Heart right ventricle (tissue), 16 donors: ENCODE measurements at regions of chr3 and their contacts with region 1.

Region 1: DNA sequence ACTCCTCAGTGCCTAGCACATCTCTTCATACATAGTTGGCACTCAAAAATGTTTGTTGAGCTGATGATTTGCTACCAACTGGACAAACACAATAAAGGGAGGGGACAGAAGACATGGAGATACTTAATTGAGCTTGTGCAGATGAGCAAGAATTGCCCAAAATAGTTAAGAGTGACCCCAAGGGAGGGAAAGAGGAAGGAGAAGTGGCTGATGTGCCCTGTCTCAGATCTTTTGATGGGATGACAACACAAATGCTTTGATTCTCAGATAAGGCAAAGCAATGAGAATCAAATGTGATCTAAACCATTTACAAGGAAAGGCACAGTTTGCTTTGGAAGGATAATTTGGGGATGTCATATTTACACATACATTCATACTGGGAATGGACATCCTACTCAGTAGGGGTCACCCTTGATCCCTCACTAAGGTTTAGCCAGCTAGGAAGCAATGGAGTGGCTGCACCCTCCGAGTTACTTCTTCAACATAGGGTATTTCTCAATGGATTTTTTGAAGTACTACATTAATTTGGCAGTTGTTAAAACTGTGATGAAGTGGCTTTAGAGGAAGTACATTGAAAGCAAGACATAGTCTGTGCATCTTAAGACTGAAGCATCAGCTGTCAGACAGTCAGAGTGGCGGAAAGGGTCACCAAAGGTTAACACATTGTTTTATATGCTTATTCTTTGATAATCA is 21.9 kb upstream of the SSR3 start:
- DNase-seq: no peak
- ATAC-seq: no peak
- H3K4me3 ChIP-seq: no peak overlapping the region
- H3K27ac ChIP-seq: peak overlapping the region in 1 of 10 donors; percentile 24
- H3K4me1 ChIP-seq: peaks cover 0 to 36% (median 0%) of the 10 kb centered on the region in 9 donors
- H3K27me3 ChIP-seq: no peaks in the 10 kb centered on the region
- CTCF ChIP-seq: peak in 5 of 9 donors; percentile 6 to 33 (median 22)

Region 2: GRCh38 chr3:156664831-156665178 is 88.0 kb after region 1 on chr3:
- intact Hi-C with region 1: loop called in 1 of 10 experiments (anchors 10 kb)
- DNase-seq: no peak
- ATAC-seq: peak in 3 of 8 donors; percentile 31 to 61 (median 49)
- H3K4me3 ChIP-seq: no peak overlapping the region
- H3K27ac ChIP-seq: peak overlapping the region in 3 of 10 donors; percentile 16 to 73 (median 34)
- H3K4me1 ChIP-seq: peaks cover 0 to 48% (median 0%) of the 10 kb centered on the region in 9 donors
- H3K27me3 ChIP-seq: no peaks in the 10 kb centered on the region
- CTCF ChIP-seq: no peak

Region 3: DNA sequence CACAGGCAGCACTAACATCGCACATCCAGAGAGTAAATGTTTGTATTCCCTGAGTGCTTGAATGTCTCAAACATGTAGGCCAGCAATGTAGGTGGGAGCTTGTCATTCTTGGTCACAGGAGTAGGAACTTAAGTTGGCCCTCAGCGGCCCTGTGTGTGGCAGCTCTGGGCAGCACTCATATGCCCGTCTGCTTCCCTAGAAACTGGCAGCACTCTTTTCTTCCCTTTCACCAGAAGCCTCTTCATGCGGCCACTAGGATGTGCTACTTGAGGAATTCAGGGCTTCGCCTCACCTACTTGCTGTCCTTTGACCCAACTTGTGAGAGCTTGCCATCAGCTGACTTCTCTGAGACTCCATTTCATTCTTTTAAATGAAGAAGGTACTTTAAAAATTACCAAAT is 167.1 kb after region 1 on chr3:
- intact Hi-C with region 1: no loop called
- DNase-seq: no peak
- ATAC-seq: no peak
- H3K4me3 ChIP-seq: no peak overlapping the region
- H3K27ac ChIP-seq: no peak overlapping the region
- H3K4me1 ChIP-seq: no peaks in the 10 kb centered on the region
- H3K27me3 ChIP-seq: no peaks in the 10 kb centered on the region
- CTCF ChIP-seq: no peak

Region 4: DNA sequence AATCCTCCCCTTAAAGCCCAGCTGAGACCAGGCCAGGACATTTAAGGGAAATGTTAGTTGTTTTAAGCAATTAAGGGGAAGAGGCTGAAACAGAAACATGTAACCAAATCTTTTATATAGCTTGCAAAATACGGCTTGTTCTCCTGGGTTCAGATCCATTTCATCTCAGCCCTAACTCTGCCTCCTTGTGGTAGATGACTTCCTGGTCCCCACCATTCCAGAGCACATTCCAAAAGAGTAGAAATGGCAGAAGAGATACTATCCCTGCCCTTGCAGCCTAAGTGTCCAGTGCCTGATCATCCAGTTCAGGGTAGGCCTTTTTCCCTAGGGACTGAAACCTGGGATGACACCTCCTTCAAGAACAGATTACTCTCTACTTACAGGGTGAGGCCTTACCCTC is 1192.6 kb after region 1 on chr3:
- intact Hi-C with region 1: no loop called
- DNase-seq: no peak
- ATAC-seq: no peak
- H3K4me3 ChIP-seq: no peak overlapping the region
- H3K27ac ChIP-seq: no peak overlapping the region
- H3K4me1 ChIP-seq: no peaks in the 10 kb centered on the region
- H3K27me3 ChIP-seq: no peaks in the 10 kb centered on the region
- CTCF ChIP-seq: no peak